ENCODE measurements at regions of chrX and their contacts with region 1.

Region 1: GRCh38 chrX:134969726-134970125 is 21.1 kb upstream of the SMIM10 start:
- DNase-seq: no peak
- ATAC-seq: peak in 1 of 4 donors; percentile 29
- H3K4me3 ChIP-seq: no peak overlapping the region
- H3K27ac ChIP-seq: no peak overlapping the region
- H3K4me1 ChIP-seq: no peaks in the 10 kb centered on the region
- H3K27me3 ChIP-seq: no peaks in the 10 kb centered on the region
- CTCF ChIP-seq: no peak
- POLR2A ChIP-seq: no peak

Region 2: DNA sequence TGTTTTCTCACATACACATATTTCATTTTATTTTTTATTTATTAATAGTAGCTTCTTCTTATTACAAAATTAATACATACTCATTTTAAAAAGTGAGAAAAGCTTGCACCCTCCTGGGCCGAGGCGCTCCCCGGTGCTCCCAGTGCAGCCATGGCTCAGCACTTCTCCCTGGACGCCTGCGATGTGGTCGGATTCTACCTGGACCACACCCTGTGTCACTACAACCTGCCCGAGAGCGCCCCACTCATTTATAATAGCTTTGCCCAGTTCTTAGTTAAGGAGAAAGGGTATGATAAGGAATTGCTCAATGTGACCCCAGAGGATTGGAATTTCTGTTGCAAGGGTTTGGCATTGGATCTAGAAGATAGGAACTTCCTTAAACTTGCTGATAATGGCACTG is 697.6 kb before region 1 on chrX:
- intact Hi-C with region 1: no loop called
- DNase-seq: no peak
- ATAC-seq: no peak
- H3K4me3 ChIP-seq: no peak overlapping the region
- H3K27ac ChIP-seq: no peak overlapping the region
- H3K4me1 ChIP-seq: no peaks in the 10 kb centered on the region
- H3K27me3 ChIP-seq: peaks cover 0 to 13% (median 0%) of the 10 kb centered on the region in 9 donors
- CTCF ChIP-seq: no peak
- POLR2A ChIP-seq: no peak

Region 3: DNA sequence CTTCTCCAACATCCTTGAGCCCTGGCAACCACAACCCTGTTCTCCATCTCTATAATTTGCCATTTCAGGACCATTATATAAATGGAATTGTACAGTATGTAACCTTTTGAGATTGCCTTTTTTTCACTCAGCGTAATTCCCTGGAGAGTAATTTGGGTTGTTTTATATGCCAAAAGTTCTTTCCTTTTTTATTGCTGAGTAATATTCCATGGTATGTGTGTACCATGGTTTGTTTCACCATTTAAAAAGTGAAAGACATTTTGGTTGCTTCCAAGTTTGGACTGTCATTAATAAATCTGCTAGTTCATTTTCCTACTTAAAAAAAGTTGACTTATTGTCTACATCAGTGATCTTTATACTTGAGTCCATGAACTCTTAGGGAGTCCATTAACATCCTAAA is 11.9 kb before region 1 on chrX:
- intact Hi-C with region 1: no loop called
- DNase-seq: no peak
- ATAC-seq: no peak
- H3K4me3 ChIP-seq: no peak overlapping the region
- H3K27ac ChIP-seq: no peak overlapping the region
- H3K4me1 ChIP-seq: no peaks in the 10 kb centered on the region
- H3K27me3 ChIP-seq: peaks cover 0 to 20% (median 0%) of the 10 kb centered on the region in 9 donors
- CTCF ChIP-seq: no peak
- POLR2A ChIP-seq: no peak

Region 4: DNA sequence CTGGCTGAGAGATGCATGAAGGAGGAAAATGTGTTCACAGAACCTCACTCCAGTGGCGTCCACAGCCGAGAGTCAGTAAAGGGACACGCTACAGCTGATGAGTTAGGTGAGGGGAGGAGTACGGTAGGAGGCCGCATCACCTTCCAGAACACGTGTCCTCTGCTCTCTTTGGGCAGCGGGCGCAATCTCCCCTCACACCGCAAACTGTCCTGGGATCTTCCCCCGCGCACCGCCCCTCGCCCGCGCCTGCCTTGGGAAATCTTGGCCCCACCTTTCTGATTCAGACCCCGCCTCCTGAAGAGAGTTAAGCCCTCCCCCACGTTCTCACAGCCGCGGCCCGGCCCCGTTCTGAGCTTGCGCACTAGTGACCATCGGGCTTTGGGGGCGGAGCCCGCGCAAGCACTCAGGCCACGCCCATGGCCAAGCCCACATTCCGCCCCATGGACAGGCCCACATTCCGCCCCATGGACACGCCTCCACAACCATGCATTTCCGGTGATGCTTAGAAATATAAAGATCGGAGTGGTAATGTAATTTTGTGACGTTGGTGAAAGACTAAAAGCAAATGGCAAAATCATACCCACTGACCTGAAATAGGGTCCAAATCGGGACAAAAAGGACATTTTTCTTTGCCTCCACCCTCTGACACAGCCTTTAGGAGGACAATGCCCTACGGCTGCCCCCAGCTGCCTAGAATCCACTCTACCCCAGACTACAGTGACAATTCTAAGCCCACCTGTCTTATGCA is 34.3 kb after region 1 on chrX:
- intact Hi-C with region 1: loop called in 7 of 10 experiments (anchors 2 to 5 kb)
- DNase-seq: peak; percentile 88 to 94 (median 91)
- ATAC-seq: peak; percentile 98 to 99 (median 99)
- H3K4me3 ChIP-seq: peak overlapping the region; percentile 9 to 68 (median 49)
- H3K27ac ChIP-seq: peak overlapping the region in 3 of 12 donors; percentile 10 to 52 (median 42)
- H3K4me1 ChIP-seq: peaks cover 0 to 9% (median 0%) of the 10 kb centered on the region in 12 donors
- H3K27me3 ChIP-seq: peaks cover 0 to 15% (median 0%) of the 10 kb centered on the region in 9 donors
- CTCF ChIP-seq: no peak
- POLR2A ChIP-seq: peak in 1 of 2 donors; percentile 36

Region 5: DNA sequence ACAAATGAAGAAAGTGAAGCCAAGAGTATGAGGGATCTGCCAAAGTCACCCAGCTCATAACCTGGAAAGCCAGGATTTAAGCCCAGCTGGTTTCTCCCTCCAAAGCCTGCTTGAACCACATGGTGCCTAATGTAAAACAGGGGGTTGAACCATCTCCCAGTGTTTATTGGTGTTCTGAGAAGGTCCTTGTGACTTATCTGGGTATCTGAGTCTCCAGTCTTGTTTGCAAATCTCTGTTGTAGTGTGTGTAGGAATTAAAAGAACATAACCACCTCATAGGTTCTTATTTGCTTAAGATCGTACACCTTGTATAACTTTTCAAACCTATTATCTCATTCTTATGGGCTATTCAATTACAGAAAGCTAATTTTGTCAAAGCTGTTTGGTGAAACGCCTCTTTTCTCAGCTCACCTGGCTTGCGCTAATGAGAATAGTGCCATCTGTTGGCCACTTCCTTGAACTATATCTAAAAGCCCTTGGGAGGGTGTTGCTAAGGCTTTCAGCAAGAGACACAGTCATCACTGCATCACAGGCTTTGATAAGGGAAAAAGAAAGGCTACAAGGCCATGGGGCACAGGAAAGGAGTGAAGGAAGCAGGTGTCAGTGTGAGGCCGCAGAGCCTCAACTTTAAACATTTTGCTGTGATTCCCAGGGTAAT is 116.6 kb after region 1 on chrX:
- intact Hi-C with region 1: loop called in 9 of 10 experiments (anchors 2 to 5 kb)
- DNase-seq: no peak
- ATAC-seq: peak in 3 of 4 donors; percentile 52 to 75 (median 70)
- H3K4me3 ChIP-seq: no peak overlapping the region
- H3K27ac ChIP-seq: no peak overlapping the region
- H3K4me1 ChIP-seq: no peaks in the 10 kb centered on the region
- H3K27me3 ChIP-seq: peaks cover 0 to 8% (median 0%) of the 10 kb centered on the region in 9 donors
- CTCF ChIP-seq: peak; percentile 34 to 64 (median 54)
- POLR2A ChIP-seq: no peak